Activated T-helper 1 cell treated with anti-CD3 and anti-CD28 coated beads, Interleukin-12 subunit alpha, Interleukin-12 subunit beta, Interleukin-2, Interleukin-4 antibody, amounts not matched to agents 30 ng/mL and 10 ng/mL and 1 ng/mL, durations not matched to agents 14 hours and 24 hours and 36 hours (primary cell): ENCODE measurements at regions of chr1 and their contacts with region 1.

Region 1: DNA sequence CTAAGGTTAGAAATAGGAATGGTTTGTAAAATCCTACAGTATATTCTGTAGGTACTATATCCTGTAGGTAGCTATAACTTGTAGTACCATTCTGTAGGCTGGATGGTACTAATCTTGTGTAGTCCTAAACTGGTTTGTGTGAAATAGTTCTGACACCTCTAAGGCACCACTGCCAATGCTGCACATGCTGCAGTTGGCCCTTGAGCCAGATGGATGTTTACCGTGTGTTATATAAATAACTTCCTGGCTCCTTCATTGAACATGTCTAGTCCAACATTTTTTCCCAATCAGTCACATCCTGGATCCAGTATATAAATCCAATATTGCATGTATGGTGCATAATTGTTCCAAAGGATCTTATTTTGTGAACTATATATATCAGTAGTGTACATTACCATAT is 89.5 kb upstream of the GNG4 start:
- DNase-seq: no peak
- H3K4me3 Mint-ChIP-seq: no peak overlapping the region
- H3K27ac Mint-ChIP-seq: no peak overlapping the region
- H3K4me1 Mint-ChIP-seq: peaks cover 11% of the 10 kb centered on the region
- H3K27me3 Mint-ChIP-seq: no peaks in the 10 kb centered on the region

Region 2: DNA sequence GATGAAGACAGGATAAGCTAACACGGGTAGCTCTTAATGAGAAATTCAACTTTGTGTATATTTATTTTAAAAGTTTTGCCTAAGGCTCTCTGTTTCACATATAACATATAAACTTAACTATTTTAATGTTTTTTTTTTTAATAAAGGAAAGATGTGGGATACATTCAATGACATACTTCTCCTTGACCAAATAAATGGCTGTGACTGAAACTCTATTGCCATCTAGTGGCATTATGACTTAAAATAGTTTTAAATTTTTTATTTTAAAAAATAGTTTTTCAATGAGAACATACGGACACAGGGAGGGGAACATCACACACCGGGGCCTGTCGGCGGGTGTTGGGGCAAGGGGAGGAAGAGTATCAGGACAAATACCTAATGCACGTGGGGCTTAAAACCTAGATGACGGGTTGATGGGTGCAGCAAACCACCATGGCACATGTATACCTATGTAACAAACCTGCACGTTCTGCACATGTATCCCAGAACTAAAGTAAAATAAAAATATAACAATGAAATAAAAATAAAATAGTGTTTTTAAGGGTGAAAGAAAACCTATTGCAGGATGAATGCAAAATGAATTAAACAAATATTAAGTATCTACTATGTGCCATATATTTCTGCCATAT is 44.1 kb after region 1 on chr1:
- intact Hi-C with region 1: loop called (anchors 5 kb)
- DNase-seq: no peak
- H3K4me3 Mint-ChIP-seq: no peak overlapping the region
- H3K27ac Mint-ChIP-seq: no peak overlapping the region
- H3K4me1 Mint-ChIP-seq: no peaks in the 10 kb centered on the region
- H3K27me3 Mint-ChIP-seq: no peaks in the 10 kb centered on the region